Heart right ventricle (tissue), 16 donors: ENCODE measurements at regions of chr1 and their contacts with region 1.

Region 1: GRCh38 chr1:227437495-227438008 is 119.3 kb upstream of the CDC42BPA start:
- DNase-seq: no peak
- ATAC-seq: peak; percentile 53 to 78 (median 69)
- H3K4me3 ChIP-seq: peak overlapping the region in 9 of 10 donors; percentile 12 to 54 (median 44)
- H3K27ac ChIP-seq: peak overlapping the region in 5 of 10 donors; percentile 30 to 68 (median 56)
- H3K4me1 ChIP-seq: peaks cover 8 to 88% (median 37%) of the 10 kb centered on the region in 9 donors
- H3K27me3 ChIP-seq: no peaks in the 10 kb centered on the region
- CTCF ChIP-seq: peak in 8 of 9 donors; percentile 28 to 79 (median 56)

Region 2: DNA sequence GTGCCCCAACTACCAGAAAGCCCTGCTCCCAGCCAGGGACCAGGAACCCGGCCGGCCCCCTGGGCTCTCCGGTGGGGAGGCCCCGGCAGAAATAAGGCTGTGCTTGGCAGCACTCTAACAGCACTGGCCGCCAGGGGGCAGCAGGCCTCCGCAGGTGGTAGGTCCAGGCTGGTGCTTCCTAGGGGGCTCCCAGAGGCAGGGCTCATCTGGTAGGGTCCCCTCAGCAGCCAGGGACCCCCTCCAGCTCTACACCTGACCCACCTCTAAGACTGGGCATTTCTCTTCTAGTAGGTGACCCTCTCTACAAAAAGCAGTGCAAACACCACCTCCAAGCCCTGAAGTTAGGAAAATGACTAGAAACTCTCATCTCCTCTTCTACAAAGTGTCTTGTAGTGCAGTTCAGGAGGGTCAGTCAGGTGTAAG is 803.4 kb before region 1 on chr1:
- intact Hi-C with region 1: loop called in 6 of 10 experiments (anchors 5 to 10 kb)
- DNase-seq: peak; percentile 80 to 86
- ATAC-seq: peak; percentile 64 to 83 (median 79)
- H3K4me3 ChIP-seq: no peak overlapping the region
- H3K27ac ChIP-seq: peak overlapping the region in 8 of 10 donors; percentile 11 to 71 (median 40)
- H3K4me1 ChIP-seq: peaks cover 7 to 68% (median 40%) of the 10 kb centered on the region in 9 donors
- H3K27me3 ChIP-seq: no peaks in the 10 kb centered on the region
- CTCF ChIP-seq: peak; percentile 93 to 98 (median 95)

Region 3: DNA sequence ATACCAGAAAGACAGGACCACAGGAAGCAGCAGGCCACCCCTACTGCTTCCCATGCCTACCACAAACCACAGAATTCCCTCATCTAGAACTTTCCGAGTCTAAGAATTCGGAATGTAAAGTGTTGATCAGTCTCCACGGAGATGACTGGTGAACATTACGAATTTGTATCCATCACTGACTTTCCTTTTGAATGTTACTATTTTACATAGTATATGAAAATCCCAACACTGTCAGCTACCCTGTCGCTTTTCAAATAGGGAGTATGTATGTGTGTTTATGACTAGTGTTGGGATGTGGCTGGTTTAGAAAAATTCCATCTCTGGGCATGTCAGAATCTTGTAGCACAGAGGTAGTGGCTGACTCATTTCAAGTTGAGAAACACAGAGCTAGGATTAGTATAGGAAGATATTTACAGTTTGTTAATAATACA is 379.2 kb before region 1 on chr1:
- intact Hi-C with region 1: loop called in 1 of 10 experiments (anchors 10 kb)
- DNase-seq: no peak
- ATAC-seq: no peak
- H3K4me3 ChIP-seq: no peak overlapping the region
- H3K27ac ChIP-seq: no peak overlapping the region
- H3K4me1 ChIP-seq: peaks cover 0 to 10% (median 0%) of the 10 kb centered on the region in 9 donors
- H3K27me3 ChIP-seq: no peaks in the 10 kb centered on the region
- CTCF ChIP-seq: no peak

Region 4: GRCh38 chr1:227219715-227220292 is 217.7 kb before region 1 on chr1:
- intact Hi-C with region 1: loop called in 1 of 10 experiments (anchors 5 kb)
- DNase-seq: no peak
- ATAC-seq: peak in 5 of 8 donors; percentile 51 to 80 (median 70)
- H3K4me3 ChIP-seq: no peak overlapping the region
- H3K27ac ChIP-seq: peak overlapping the region in 5 of 10 donors; percentile 5 to 50 (median 37)
- H3K4me1 ChIP-seq: peaks cover 0 to 62% (median 25%) of the 10 kb centered on the region in 9 donors
- H3K27me3 ChIP-seq: no peaks in the 10 kb centered on the region
- CTCF ChIP-seq: peak in 3 of 9 donors; percentile 28 to 36 (median 31)

Region 5: GRCh38 chr1:227245613-227246320 is 191.8 kb before region 1 on chr1:
- intact Hi-C with region 1: loop called in 1 of 10 experiments (anchors 5 kb)
- DNase-seq: peak; percentile 31 to 40
- ATAC-seq: peak; percentile 59 to 95 (median 86)
- H3K4me3 ChIP-seq: no peak overlapping the region
- H3K27ac ChIP-seq: peak overlapping the region in 7 of 10 donors; percentile 6 to 54 (median 24)
- H3K4me1 ChIP-seq: peaks cover 0 to 53% (median 14%) of the 10 kb centered on the region in 9 donors
- H3K27me3 ChIP-seq: no peaks in the 10 kb centered on the region
- CTCF ChIP-seq: peak in 3 of 9 donors; percentile 21 to 40 (median 29)

Region 6: GRCh38 chr1:227299241-227299627 is 138.3 kb before region 1 on chr1:
- intact Hi-C with region 1: no loop called
- DNase-seq: no peak
- ATAC-seq: peak in 3 of 8 donors; percentile 25 to 49 (median 41)
- H3K4me3 ChIP-seq: peak overlapping the region in 2 of 10 donors; percentile 7 to 8
- H3K27ac ChIP-seq: peak overlapping the region in 6 of 10 donors; percentile 24 to 62 (median 40)
- H3K4me1 ChIP-seq: peaks cover 0 to 47% (median 29%) of the 10 kb centered on the region in 9 donors
- H3K27me3 ChIP-seq: no peaks in the 10 kb centered on the region
- CTCF ChIP-seq: no peak

Region 7: GRCh38 chr1:227357171-227357880 is 80.2 kb before region 1 on chr1:
- intact Hi-C with region 1: loop called in 2 of 10 experiments (anchors 5 kb)
- DNase-seq: peak; percentile 47 to 84
- ATAC-seq: peak; percentile 94 to 99 (median 98)
- H3K4me3 ChIP-seq: no peak overlapping the region
- H3K27ac ChIP-seq: peak overlapping the region; percentile 31 to 91 (median 74)
- H3K4me1 ChIP-seq: peaks cover 4 to 34% (median 23%) of the 10 kb centered on the region in 9 donors
- H3K27me3 ChIP-seq: no peaks in the 10 kb centered on the region
- CTCF ChIP-seq: peak in 1 of 9 donors; percentile 22

Region 8: DNA sequence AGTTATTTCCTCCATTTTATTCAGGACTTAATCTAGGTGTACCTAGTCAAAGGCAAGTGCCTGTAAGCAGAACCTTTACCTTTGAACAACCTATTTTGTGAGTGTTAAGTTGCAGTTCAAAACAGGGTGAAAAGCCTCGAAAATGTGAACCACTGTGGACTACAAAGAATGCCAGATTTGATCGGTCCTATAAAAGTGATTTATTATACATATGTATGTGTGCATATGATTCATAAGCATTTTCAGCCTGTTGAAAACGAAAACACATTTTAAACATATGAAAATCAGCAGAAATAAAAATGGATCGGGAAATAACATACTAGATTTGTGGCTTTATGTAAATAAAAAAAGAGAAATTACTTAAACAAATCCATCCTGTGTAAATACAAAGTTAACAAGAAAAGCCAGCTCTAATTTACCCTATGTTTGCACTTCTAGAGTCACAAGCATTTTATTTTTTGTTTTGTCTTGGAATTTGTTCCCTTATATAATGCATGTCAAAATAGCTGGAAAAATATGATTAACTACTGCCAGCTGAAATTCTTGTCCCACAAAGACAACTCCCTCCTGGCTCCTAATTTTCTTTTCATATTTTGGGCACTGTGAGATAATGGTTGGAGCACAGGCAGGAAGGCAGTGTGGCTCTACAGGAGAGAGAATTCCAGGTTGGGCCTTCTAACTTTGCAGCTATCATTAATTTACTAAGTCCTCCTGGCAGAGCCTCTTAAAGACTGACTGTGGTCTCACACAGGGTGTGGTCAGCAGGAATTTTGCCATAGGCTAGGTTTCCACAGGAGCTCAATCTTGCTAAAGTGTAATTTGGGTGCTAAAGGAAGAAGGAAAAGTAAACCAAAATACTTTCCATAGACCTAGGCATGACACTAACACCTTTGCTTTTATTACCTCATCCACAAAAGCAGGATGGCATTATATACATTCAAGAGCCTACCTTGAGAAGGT is 49.1 kb before region 1 on chr1:
- intact Hi-C with region 1: no loop called
- DNase-seq: no peak
- ATAC-seq: no peak
- H3K4me3 ChIP-seq: no peak overlapping the region
- H3K27ac ChIP-seq: peak overlapping the region in 1 of 10 donors; percentile 26
- H3K4me1 ChIP-seq: peaks cover 0 to 8% (median 0%) of the 10 kb centered on the region in 9 donors
- H3K27me3 ChIP-seq: no peaks in the 10 kb centered on the region
- CTCF ChIP-seq: no peak